ENCODE measurements at regions of chr7 and their contacts with region 1.

Region 1: GRCh38 chr7:88539518-88539917 is 220.0 kb upstream of the ZNF804B start:
- DNase-seq: no peak
- H3K4me3 Mint-ChIP-seq: no peak overlapping the region
- H3K27ac Mint-ChIP-seq: no peak overlapping the region
- H3K4me1 Mint-ChIP-seq: no peaks in the 10 kb centered on the region
- H3K27me3 Mint-ChIP-seq: no peaks in the 10 kb centered on the region
- CTCF ChIP-seq: no peak

Region 2: DNA sequence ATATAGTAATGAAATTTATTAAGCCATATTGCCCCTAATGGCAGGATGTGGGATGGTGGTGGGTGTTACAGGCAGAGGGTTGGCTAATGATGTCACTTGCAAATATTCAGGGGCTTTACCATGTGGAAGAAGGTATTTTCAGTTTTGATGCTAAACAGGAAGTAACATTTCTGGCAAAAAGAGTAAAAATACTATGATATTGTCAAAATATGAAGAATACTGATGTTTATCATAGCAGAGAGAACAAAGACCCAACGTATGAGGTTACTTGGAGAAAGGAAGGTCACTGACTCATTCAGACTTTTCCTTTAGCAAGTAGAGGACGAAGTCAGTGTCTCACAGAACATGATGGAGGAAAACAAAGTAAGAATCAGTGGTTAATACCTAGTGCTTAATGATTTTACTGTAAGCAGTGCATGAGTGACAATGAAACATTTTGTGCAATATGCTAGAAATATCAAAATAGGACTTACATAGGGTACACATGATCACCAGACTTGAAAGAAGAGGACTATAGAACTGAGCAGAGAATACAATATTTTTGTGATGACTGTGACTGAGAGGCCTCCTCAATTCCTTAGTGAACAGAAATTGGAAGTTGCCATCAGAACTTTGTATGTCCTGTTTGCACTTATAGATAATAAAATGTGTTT is 143.1 kb before region 1 on chr7:
- CTCF ChIA-PET with region 1: no interaction called
- intact Hi-C with region 1: loop called (anchors 10 kb)
- DNase-seq: no peak
- H3K4me3 Mint-ChIP-seq: no peak overlapping the region
- H3K27ac Mint-ChIP-seq: no peak overlapping the region
- H3K4me1 Mint-ChIP-seq: no peaks in the 10 kb centered on the region
- H3K27me3 Mint-ChIP-seq: no peaks in the 10 kb centered on the region
- CTCF ChIP-seq: no peak

Measured in Calu3 (cell line).